GM12878 (cell line): ENCODE measurements at regions of chr12 and their contacts with region 1.

Region 1: DNA sequence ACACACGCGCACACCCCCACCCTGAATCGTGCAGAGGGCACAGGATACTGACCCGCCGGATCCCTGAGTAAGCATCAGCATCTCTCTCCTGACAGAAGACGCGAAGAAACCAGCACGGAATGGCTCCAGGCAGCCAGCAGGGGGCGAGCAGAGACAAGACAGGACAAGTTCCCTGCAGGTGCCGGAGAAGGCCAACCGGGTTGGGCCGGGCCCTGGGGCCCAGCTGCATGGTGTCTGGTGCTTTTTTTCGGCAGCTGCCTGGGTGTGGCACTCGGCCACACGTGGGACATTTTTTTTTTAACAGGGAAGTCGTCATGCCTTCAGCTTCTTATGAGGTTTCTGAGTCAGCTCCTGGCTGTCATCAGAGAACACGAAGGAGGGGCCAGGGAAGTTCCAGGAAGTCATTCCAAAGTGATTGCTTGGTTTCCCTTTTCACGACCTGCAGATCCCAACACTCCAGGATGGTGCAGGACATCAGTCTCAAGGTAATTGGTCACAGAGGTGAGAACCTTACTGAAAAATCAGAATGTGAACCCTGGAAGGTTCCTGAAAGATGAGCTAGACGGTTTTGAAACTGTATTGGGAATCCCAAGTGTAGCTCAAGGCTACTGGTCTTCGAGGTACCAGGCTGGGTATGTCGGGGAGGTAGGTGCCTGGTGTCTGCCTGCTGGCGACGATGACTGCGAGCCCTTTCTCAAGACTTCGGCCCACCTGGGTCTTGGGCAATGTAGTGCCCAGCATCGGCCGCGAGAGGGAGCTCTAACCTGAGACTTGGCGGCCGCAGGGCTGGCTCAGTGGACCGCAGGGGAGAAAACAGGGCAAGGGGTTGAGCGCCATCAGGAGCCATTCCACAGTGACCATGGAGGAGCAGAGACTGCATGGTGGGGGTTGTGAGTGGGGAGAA is 190.8 kb upstream of the PRMT8 start:
- DNase-seq: peak; percentile 24
- ATAC-seq: peak; percentile 93
- H3K4me3 ChIP-seq: no peak overlapping the region
- H3K27ac ChIP-seq: no peak overlapping the region
- H3K4me1 ChIP-seq: no peaks in the 10 kb centered on the region
- H3K27me3 ChIP-seq: peaks cover 0 to 1% of the 10 kb centered on the region in 2 experiments; a peak in 2 of 4 replicates
- CTCF ChIP-seq: peak; percentile 88 to 97 (median 96)
- EP300 ChIP-seq: no peak
- POLR2A ChIP-seq: no peak
- RAD21 ChIP-seq: peak; percentile 86

Region 2: DNA sequence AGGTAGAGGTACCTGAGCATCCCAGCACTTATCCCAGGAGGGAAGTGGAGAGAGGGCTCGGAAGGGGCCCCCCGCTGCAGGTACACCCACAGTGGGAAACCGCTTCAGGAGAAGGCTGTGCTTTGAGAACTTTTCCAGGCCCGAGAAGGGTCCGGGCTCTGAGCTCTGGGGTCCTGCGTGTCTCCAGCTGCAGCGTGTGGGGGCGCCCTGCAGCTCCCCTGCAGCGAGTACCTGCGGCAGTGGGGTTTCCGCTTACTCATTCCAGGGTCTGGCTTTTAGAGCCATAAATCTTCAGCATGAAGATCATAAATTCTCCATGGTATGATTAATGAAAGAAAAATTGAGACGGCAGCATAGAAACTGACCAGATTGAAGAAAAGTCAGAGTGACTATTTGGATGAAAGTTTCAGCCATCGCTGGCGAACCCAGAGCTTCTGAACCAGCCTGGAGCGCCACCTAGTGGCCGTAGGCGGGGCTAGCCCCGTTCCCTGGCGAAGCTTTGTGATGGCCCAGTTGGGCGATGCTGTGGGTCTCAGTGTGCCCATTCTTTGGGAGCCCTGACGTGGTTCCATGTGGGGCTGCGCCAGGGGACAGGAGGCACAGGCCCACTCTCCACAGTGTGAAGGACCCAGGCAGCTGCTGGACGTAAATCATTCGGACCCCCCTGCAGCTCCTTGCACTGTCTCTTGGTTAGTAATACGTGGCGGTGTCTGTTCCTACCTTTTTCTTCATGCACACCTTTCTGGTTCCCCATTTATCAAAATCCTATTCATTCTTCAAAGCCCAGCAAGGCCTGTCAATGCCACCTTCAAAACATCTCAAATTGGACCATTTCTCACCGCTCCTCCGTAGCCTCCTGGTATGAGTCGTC is 24.8 kb before region 1 on chr12:
- CTCF ChIA-PET with region 1: interaction called, 19 read pairs
- POLR2A ChIA-PET with region 1: no interaction called
- RAD21 ChIA-PET with region 1: interaction called, 4 read pairs
- SMC1A ChIA-PET with region 1: interaction called, 6 read pairs
- in situ Hi-C with region 1: no loop called
- intact Hi-C with region 1: no loop called
- DNase-seq: no peak
- ATAC-seq: peak; percentile 96
- H3K4me3 ChIP-seq: no peak overlapping the region
- H3K27ac ChIP-seq: no peak overlapping the region
- H3K4me1 ChIP-seq: no peaks in the 10 kb centered on the region
- H3K27me3 ChIP-seq: no peaks in the 10 kb centered on the region; a peak in 2 of 4 replicates
- CTCF ChIP-seq: peak; percentile 83 to 96 (median 95)
- EP300 ChIP-seq: no peak
- POLR2A ChIP-seq: no peak
- RAD21 ChIP-seq: peak; percentile 85

Region 3: DNA sequence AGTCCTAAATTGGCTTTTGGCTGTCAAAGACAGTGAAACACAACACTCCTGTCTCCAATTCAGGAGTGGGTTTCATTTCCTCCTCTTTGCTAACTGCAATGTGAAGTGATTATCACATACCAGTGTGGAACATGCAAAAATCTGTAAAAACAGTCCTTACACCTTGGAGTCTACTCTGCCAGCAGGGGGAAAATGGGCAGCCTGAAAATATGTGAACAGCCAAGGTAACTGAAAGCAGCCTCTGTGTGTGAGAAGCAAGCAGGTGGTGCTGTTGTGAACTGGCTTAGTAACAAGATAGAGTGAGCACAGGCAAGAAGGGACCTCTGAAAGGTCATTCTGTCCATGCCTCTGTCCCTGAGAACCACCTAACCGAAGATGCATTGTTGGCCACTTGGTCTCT is 196.8 kb after region 1 on chr12:
- CTCF ChIA-PET with region 1: interaction called, 11 read pairs
- POLR2A ChIA-PET with region 1: no interaction called
- RAD21 ChIA-PET with region 1: no interaction called
- SMC1A ChIA-PET with region 1: no interaction called
- in situ Hi-C with region 1: no loop called
- intact Hi-C with region 1: no loop called
- DNase-seq: no peak
- ATAC-seq: no peak
- H3K4me3 ChIP-seq: no peak overlapping the region
- H3K27ac ChIP-seq: no peak overlapping the region
- H3K4me1 ChIP-seq: no peaks in the 10 kb centered on the region
- H3K27me3 ChIP-seq: peaks cover 0 to 4% of the 10 kb centered on the region in 2 experiments; a peak in 2 of 4 replicates
- CTCF ChIP-seq: no peak; a peak in 1 of 6 replicates
- EP300 ChIP-seq: no peak
- POLR2A ChIP-seq: no peak
- RAD21 ChIP-seq: no peak

Region 4: DNA sequence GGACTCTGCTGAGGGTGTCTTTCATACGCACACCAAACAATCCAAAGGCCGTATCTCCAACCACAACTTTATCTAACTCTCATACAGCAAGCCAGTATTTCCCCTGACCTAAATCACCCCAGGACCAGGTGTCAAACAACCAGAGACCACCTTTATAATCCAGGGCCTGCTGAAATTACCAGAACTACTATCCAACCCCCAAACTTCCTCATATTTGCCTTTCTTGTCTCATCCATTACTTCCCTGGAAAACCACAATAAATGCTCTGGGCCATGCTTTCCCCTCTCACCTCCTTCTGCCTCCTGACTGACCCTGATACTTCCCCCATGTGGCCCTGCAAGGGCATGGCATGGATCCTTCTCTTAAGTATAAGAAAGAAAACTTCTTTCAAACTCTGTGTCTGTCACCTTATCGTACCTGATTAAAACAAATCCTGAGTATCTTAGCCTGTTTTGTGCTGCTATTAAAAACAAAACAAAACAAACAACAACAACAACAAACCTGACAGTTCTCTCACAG is 497.4 kb after region 1 on chr12:
- CTCF ChIA-PET with region 1: interaction called, 64 read pairs
- POLR2A ChIA-PET with region 1: no interaction called
- RAD21 ChIA-PET with region 1: interaction called, 11 read pairs
- SMC1A ChIA-PET with region 1: interaction called, 21 read pairs
- in situ Hi-C with region 1: loop called (anchors 5 kb)
- intact Hi-C with region 1: no loop called
- DNase-seq: no peak
- ATAC-seq: no peak
- H3K4me3 ChIP-seq: no peak overlapping the region
- H3K27ac ChIP-seq: no peak overlapping the region
- H3K4me1 ChIP-seq: no peaks in the 10 kb centered on the region
- H3K27me3 ChIP-seq: no peaks in the 10 kb centered on the region
- CTCF ChIP-seq: 0 out of 6 replicates have a peak, but pooled peaks of 1 of the 3 experiments have one; percentile 5
- EP300 ChIP-seq: no peak
- POLR2A ChIP-seq: no peak
- RAD21 ChIP-seq: no peak

Region 5: GRCh38 chr12:3820122-3820521 is 519.9 kb after region 1 on chr12:
- CTCF ChIA-PET with region 1: interaction called, 10 read pairs
- POLR2A ChIA-PET with region 1: no interaction called
- RAD21 ChIA-PET with region 1: no interaction called
- SMC1A ChIA-PET with region 1: interaction called, 3 read pairs
- in situ Hi-C with region 1: no loop called
- intact Hi-C with region 1: no loop called
- DNase-seq: no peak
- ATAC-seq: no peak
- H3K4me3 ChIP-seq: no peak overlapping the region
- H3K27ac ChIP-seq: no peak overlapping the region
- H3K4me1 ChIP-seq: no peaks in the 10 kb centered on the region
- H3K27me3 ChIP-seq: no peaks in the 10 kb centered on the region
- CTCF ChIP-seq: no peak
- EP300 ChIP-seq: no peak
- POLR2A ChIP-seq: no peak
- RAD21 ChIP-seq: no peak